HCT116 (cell line): ENCODE measurements at regions of chr2 and their contacts with region 1.

Region 1: GRCh38 chr2:240143801-240144648 is 3.6 kb upstream of the OTOS start:
- DNase-seq: peak; percentile 16
- ATAC-seq: peak; percentile 97
- H3K4me3 ChIP-seq: no peak overlapping the region
- H3K27ac ChIP-seq: no peak overlapping the region
- H3K4me1 ChIP-seq: peaks cover 0 to 8% of the 10 kb centered on the region in 2 experiments; a peak in 1 of 4 replicates
- H3K27me3 ChIP-seq: no peaks in the 10 kb centered on the region
- CTCF ChIP-seq: peak; percentile 79 to 88 (median 88)
- POLR2A ChIP-seq: no peak
- RAD21 ChIP-seq: peak; percentile 98

Region 2: GRCh38 chr2:238358769-238359168 is 1785.3 kb before region 1 on chr2:
- CTCF ChIA-PET with region 1: no interaction called
- POLR2A ChIA-PET with region 1: no interaction called
- RAD21 ChIA-PET with region 1: no interaction called
- intact Hi-C with region 1: loop called (anchors 5 kb)
- DNase-seq: no peak
- ATAC-seq: no peak
- H3K4me3 ChIP-seq: no peak overlapping the region
- H3K27ac ChIP-seq: no peak overlapping the region
- H3K4me1 ChIP-seq: peaks cover 5 to 8% of the 10 kb centered on the region in 2 experiments; a peak in 3 of 4 replicates
- H3K27me3 ChIP-seq: no peaks in the 10 kb centered on the region
- CTCF ChIP-seq: no peak
- POLR2A ChIP-seq: no peak
- RAD21 ChIP-seq: no peak

Region 3: GRCh38 chr2:240060977-240061591 is 82.9 kb before region 1 on chr2:
- CTCF ChIA-PET with region 1: interaction called, 64 read pairs
- POLR2A ChIA-PET with region 1: no interaction called
- RAD21 ChIA-PET with region 1: interaction called in 1 of 2 experiments, 19 read pairs
- intact Hi-C with region 1: loop called (anchors 1 kb)
- DNase-seq: peak; percentile 54
- ATAC-seq: peak; percentile 94
- H3K4me3 ChIP-seq: no peak overlapping the region
- H3K27ac ChIP-seq: no peak overlapping the region
- H3K4me1 ChIP-seq: peaks cover 0 to 3% of the 10 kb centered on the region in 2 experiments; a peak in 1 of 4 replicates
- H3K27me3 ChIP-seq: peaks cover 14% of the 10 kb centered on the region
- CTCF ChIP-seq: peak; percentile 58 to 81 (median 74)
- POLR2A ChIP-seq: no peak
- RAD21 ChIP-seq: peak; percentile 90